Activated CD4-positive, alpha-beta T cell treated with anti-CD3 and anti-CD28 coated beads, Interleukin-2, amount 10 ng/mL, durations not matched to agents 24 days and 14 days (primary cell): ENCODE measurements at regions of chr2 and their contacts with region 1.

Region 1: GRCh38 chr2:61016808-61017555 is 538 bp upstream of the PEX13 start:
- DNase-seq: peak; percentile 92
- H3K4me3 Mint-ChIP-seq: peak overlapping the region; percentile 99
- H3K27ac Mint-ChIP-seq: peak overlapping the region; percentile 99
- H3K4me1 Mint-ChIP-seq: peaks cover 32% of the 10 kb centered on the region
- H3K27me3 Mint-ChIP-seq: no peaks in the 10 kb centered on the region

Region 2: GRCh38 chr2:60806988-60807681 is 209.8 kb before region 1 on chr2:
- intact Hi-C with region 1: loop called (anchors 1 kb)
- DNase-seq: peak; percentile 72
- H3K4me3 Mint-ChIP-seq: peak overlapping the region; percentile 56
- H3K27ac Mint-ChIP-seq: peak overlapping the region; percentile 87
- H3K4me1 Mint-ChIP-seq: peaks cover 46% of the 10 kb centered on the region
- H3K27me3 Mint-ChIP-seq: no peaks in the 10 kb centered on the region

Region 3: GRCh38 chr2:60899230-60899891 is 117.6 kb before region 1 on chr2:
- intact Hi-C with region 1: loop called (anchors 2 kb)
- DNase-seq: no peak
- H3K4me3 Mint-ChIP-seq: peak overlapping the region; percentile 58
- H3K27ac Mint-ChIP-seq: peak overlapping the region; percentile 90
- H3K4me1 Mint-ChIP-seq: peaks cover 37% of the 10 kb centered on the region
- H3K27me3 Mint-ChIP-seq: no peaks in the 10 kb centered on the region

Region 4: GRCh38 chr2:61065715-61066709 is 49.0 kb after region 1 on chr2 and contains the start of gene SANBR:
- intact Hi-C with region 1: loop called (anchors 1 kb)
- DNase-seq: peak; percentile 97
- H3K4me3 Mint-ChIP-seq: peak within 1 kb of the TSS; percentile 84
- H3K27ac Mint-ChIP-seq: peak within 1 kb of the TSS; percentile 80
- H3K4me1 Mint-ChIP-seq: peaks cover 8% of the 10 kb centered on the region
- H3K27me3 Mint-ChIP-seq: peaks cover 1% of the 10 kb centered on the region
- total RNA-seq, gene SANBR: 3.1 and 3.4 TPM in 2 replicates

Region 5: GRCh38 chr2:61176755-61177726 is 160.1 kb after region 1 on chr2:
- intact Hi-C with region 1: loop called (anchors 1 kb)
- DNase-seq: peak; percentile 99
- H3K4me3 Mint-ChIP-seq: peak overlapping the region; percentile 90
- H3K27ac Mint-ChIP-seq: peak overlapping the region; percentile 82
- H3K4me1 Mint-ChIP-seq: peaks cover 50% of the 10 kb centered on the region
- H3K27me3 Mint-ChIP-seq: peaks cover 9% of the 10 kb centered on the region

Region 6: GRCh38 chr2:62306751-62307468 is 1289.9 kb after region 1 on chr2:
- intact Hi-C with region 1: loop called (anchors 10 kb)
- DNase-seq: peak; percentile 82
- H3K4me3 Mint-ChIP-seq: peak overlapping the region; percentile 60
- H3K27ac Mint-ChIP-seq: peak overlapping the region; percentile 94
- H3K4me1 Mint-ChIP-seq: peaks cover 71% of the 10 kb centered on the region
- H3K27me3 Mint-ChIP-seq: peaks cover 1% of the 10 kb centered on the region